HEK293T (cell line): ENCODE measurements at regions of chrX and their contacts with region 1.

Region 1: DNA sequence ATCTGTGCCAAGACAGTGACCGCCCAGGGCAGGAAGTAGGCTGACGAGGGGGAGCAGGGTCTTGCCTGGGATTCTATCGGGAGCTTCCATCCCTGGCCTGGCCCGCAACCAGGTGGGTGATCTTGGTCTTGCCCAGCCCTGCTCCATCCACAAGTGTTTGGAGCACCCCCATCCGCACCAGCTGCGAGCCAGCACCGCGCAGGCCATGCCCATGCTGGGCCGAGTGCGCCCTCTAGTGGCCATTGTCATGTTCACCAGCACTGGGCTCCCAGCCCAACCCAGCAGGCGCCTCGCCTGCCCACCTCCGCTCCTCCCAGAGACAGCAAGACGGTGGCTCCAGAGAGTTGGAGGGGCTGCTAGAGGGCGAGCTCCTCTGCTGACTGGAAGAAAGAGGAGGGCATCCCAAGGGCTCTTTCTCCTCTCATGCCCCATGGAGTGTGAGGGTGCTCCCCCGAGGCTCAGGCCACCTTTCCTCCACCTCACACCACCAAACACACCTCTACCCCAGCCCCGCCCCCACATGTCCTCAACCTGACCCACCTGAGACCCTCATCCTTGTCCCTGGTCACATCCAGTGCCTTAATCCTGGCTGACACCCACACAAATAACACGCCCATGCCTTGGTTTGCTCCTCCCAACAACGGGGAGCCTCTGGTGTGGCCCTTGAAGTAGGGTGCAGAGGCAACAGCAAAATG is 9.8 kb upstream of the ATP2B3 start:
- DNase-seq: peak; percentile 97

Region 2: GRCh38 chrX:152619897-152620296 is 887.7 kb before region 1 on chrX:
- CTCF ChIA-PET with region 1: no interaction called
- POLR2A ChIA-PET with region 1: no interaction called
- DNase-seq: no peak

Region 3: DNA sequence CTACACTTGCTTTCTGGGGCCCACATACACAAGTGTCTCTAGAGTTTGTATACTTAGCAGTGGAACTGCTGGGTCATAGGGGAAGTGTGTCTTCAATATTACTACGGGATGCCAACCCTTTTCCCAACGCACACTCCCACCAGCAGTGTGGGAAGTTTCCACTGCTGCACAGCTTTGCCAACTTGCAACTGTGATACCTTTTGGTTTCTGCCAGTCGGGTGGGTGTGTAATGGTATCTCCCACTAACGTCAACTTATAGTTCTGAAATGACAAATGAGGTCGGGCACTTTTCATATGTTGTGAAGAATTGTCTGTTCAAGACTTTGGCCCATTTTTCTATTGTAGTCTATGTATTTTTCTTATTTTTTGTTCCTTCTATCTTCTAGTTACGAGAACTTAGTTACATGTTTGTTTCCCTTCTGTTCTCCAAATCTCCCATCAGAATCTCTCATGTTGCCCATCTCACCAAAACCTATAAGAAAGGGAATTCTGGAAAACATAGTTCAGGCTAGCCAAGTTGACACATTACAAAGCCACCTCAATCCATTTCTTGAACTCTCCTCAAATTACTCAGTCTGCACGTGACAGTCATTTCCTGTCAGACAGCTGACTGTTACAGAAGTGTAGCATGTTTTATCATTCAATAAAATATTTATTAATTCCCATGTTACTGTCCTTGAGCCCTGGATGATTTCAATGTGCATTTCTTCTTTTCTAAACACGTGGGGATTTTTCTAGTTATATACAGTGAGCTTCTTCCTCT is 137.2 kb before region 1 on chrX:
- CTCF ChIA-PET with region 1: no interaction called
- POLR2A ChIA-PET with region 1: no interaction called
- DNase-seq: no peak

Region 4: DNA sequence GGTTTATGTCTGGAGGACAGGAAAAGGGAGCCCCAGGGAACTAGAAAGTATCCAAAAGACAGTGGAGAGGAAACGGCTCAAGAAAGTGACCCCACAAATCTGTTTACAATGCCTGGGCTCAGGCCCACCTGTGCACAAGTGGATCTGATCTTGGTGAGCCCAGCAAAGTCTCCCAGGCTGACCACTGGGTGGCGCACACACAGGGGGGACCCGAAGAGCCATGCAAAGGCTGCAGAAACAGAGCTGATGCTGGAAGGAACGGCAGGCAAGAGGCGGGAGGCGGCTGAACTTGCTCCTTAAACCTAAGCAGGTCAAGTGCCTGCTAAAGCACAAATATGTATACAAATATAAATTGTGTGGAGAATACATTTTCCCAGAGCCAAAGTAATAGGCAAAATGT is 46.8 kb before region 1 on chrX:
- CTCF ChIA-PET with region 1: interaction called, 16 read pairs
- POLR2A ChIA-PET with region 1: no interaction called
- DNase-seq: peak; percentile 79

Region 5: GRCh38 chrX:153470435-153471363 is 36.9 kb before region 1 on chrX and contains the start of gene HAUS7:
- CTCF ChIA-PET with region 1: interaction called, 17 read pairs
- POLR2A ChIA-PET with region 1: no interaction called
- DNase-seq: peak; percentile 97

Region 6: GRCh38 chrX:153488231-153488914 is 19.3 kb before region 1 on chrX:
- CTCF ChIA-PET with region 1: no interaction called
- POLR2A ChIA-PET with region 1: no interaction called
- DNase-seq: no peak

Region 7: GRCh38 chrX:153687121-153688039 is 179.7 kb after region 1 on chrX and contains the start of gene SLC6A8:
- CTCF ChIA-PET with region 1: no interaction called
- POLR2A ChIA-PET with region 1: no interaction called
- DNase-seq: peak; percentile 75